Caco-2 (cell line): ENCODE measurements at regions of chr6 and their contacts with region 1.

Region 1: DNA sequence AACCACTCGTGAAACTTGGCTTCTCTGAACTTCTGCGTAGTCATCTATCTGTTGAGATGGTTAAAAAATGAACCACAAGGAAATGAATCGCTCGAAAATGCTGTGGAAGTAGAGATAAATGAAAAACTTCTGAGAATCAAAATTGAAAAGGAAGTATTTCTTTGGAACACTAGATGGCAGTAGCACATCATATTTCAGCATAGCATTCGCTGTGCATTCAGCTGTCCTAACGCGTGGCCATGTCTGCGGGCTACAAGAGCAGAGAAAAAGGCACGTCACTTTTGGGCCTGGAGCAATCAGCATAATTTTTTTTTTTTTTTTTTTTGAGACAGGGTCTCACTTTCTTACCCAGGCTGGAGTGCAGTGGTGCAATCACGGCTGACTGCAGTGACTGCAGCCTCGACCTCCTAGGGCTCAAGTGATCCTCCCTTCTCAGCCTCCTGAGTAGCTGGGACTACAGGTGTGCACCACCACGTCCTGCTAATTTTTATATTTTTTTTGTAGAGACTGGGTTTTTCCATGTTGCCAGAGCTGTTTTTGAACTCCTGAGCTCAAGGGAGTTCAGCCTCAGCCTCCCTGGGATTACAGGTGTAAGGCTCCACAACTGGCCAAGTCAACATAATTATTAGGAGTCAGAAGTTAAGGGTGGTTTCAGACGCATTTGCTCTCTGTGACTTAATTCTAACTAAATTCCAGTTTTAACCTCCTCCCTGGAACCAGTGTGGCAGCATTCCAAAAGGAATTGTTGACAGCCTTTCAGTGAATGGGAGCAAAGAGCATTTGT is 8.8 kb upstream of the PERP start:
- DNase-seq: peak; percentile 67 to 73
- H3K4me3 ChIP-seq: no peak overlapping the region
- H3K4me3 Mint-ChIP-seq: no peak overlapping the region
- H3K27ac Mint-ChIP-seq: peak overlapping the region; percentile 1
- H3K4me1 ChIP-seq: peaks cover 13% of the 10 kb centered on the region; the same call in 1 of the 2 replicates
- H3K4me1 Mint-ChIP-seq: peaks cover 7% of the 10 kb centered on the region
- H3K27me3 ChIP-seq: no peaks in the 10 kb centered on the region
- H3K27me3 Mint-ChIP-seq: no peaks in the 10 kb centered on the region
- CTCF ChIP-seq: peak; percentile 55 to 58

Region 2: DNA sequence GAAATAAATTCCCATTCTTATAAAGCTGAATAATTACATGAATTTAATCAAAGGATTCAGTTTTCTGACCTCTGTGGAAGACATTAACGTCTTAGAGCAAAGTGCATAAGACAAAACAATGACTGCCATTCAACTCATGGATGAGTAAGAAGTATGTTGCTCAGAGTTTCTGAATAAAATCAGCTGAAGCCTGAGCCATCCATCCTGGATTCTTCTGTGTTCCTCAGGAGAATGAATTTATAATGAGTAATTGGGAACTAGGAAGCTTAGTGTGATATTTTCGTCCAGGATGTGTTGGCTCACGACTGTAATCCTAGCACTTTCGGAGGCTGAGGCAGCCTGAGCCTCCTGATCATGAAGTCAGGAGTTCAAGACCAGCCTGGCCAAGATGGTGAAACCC is 71.6 kb before region 1 on chr6:
- CTCF ChIA-PET with region 1: no interaction called
- POLR2A ChIA-PET with region 1: no interaction called
- intact Hi-C with region 1: no loop called
- DNase-seq: no peak
- H3K4me3 ChIP-seq: no peak overlapping the region
- H3K4me3 Mint-ChIP-seq: no peak overlapping the region
- H3K27ac Mint-ChIP-seq: no peak overlapping the region
- H3K4me1 ChIP-seq: no peaks in the 10 kb centered on the region
- H3K4me1 Mint-ChIP-seq: no peaks in the 10 kb centered on the region
- H3K27me3 ChIP-seq: no peaks in the 10 kb centered on the region
- H3K27me3 Mint-ChIP-seq: no peaks in the 10 kb centered on the region
- CTCF ChIP-seq: no peak

Region 3: DNA sequence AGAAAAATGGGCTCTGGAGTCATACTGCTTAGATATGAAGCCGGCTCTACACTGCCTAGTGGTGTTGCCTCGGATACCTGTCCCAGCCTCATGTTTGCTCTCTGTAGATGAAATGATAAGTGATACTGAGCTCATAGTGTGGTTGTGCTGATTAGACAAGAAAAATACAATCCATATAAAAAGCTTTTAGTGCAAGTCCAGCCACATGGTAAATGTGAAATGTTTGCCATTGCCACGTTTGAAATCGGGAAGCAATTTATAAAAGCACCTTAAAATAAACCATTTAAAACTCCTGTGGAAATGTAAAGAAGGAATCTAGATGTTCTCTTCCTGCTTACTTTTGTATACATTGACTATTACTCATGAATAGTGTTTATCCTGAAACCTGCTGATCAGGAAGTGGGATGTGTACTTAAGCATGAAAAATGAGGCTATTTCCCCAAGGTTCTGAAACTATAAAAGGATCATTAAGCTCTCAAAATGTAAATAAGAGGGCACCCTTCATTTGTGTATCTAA is 115.4 kb after region 1 on chr6:
- CTCF ChIA-PET with region 1: interaction called, 8 read pairs
- POLR2A ChIA-PET with region 1: no interaction called
- intact Hi-C with region 1: loop called (anchors 5 kb)
- DNase-seq: peak; percentile 45 to 51
- H3K4me3 ChIP-seq: no peak overlapping the region
- H3K4me3 Mint-ChIP-seq: peak overlapping the region; percentile 25
- H3K27ac Mint-ChIP-seq: peak overlapping the region; percentile 47
- H3K4me1 ChIP-seq: peaks cover 27% of the 10 kb centered on the region
- H3K4me1 Mint-ChIP-seq: peaks cover 34% of the 10 kb centered on the region
- H3K27me3 ChIP-seq: no peaks in the 10 kb centered on the region
- H3K27me3 Mint-ChIP-seq: no peaks in the 10 kb centered on the region
- CTCF ChIP-seq: no peak

Region 4: DNA sequence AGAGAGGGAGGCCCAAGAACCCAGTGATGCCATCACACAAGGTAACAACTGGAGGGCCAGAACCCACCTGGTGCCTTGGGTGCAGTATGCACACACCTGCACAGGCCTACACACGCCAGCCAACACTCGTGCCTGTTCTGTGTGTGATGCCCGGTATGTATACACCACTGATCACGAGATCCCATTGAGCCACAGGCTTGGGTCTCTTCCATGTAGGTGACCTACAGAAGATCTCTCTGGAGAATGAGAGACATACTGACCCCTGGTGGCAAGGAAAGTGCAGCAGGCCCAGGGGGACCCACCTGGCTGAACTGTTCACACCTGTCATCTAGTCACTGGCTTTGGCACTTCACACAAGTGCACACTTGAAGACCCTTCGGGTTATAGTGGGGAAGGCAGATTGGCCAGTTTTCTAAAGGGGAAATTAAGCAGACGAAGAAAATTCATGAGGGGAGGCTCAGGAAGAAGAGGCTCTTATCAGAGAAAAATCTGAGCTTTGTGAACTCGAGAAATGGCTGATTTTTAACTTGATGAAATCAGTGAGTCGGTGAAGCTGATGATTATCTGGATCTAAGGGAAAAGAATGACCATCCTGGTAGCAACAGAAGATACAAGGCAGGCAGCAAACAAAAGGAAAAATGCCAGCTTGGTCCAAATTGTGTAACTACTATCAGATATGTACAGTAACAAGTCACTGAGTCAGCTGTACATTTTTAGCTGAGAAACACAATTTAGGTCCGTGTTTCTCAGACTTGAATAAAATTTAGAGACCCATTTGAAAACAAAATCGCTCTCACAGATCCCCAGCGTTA is 171.3 kb after region 1 on chr6:
- CTCF ChIA-PET with region 1: interaction called, 3 read pairs
- POLR2A ChIA-PET with region 1: no interaction called
- intact Hi-C with region 1: loop called (anchors 1 kb)
- DNase-seq: peak; percentile 69 to 77
- H3K4me3 ChIP-seq: no peak overlapping the region
- H3K4me3 Mint-ChIP-seq: no peak overlapping the region
- H3K27ac Mint-ChIP-seq: peak overlapping the region; percentile 13
- H3K4me1 ChIP-seq: no peaks in the 10 kb centered on the region
- H3K4me1 Mint-ChIP-seq: no peaks in the 10 kb centered on the region
- H3K27me3 ChIP-seq: no peaks in the 10 kb centered on the region
- H3K27me3 Mint-ChIP-seq: no peaks in the 10 kb centered on the region
- CTCF ChIP-seq: peak; percentile 69 to 81

Region 5: GRCh38 chr6:138509371-138509770 is 393.3 kb after region 1 on chr6:
- CTCF ChIA-PET with region 1: no interaction called
- POLR2A ChIA-PET with region 1: no interaction called
- intact Hi-C with region 1: loop called (anchors 1 kb)
- DNase-seq: peak; percentile 47 to 64
- H3K4me3 ChIP-seq: no peak overlapping the region
- H3K4me3 Mint-ChIP-seq: no peak overlapping the region
- H3K27ac Mint-ChIP-seq: no peak overlapping the region
- H3K4me1 ChIP-seq: peaks cover 50% of the 10 kb centered on the region
- H3K4me1 Mint-ChIP-seq: peaks cover 27% of the 10 kb centered on the region
- H3K27me3 ChIP-seq: no peaks in the 10 kb centered on the region
- H3K27me3 Mint-ChIP-seq: no peaks in the 10 kb centered on the region
- CTCF ChIP-seq: peak; percentile 41 to 61

Region 6: GRCh38 chr6:138765896-138766655 is 650.0 kb after region 1 on chr6:
- CTCF ChIA-PET with region 1: interaction called, 3 read pairs
- POLR2A ChIA-PET with region 1: no interaction called
- intact Hi-C with region 1: loop called (anchors 5 kb)
- DNase-seq: peak in 1 of 2 experiments; percentile 25
- H3K4me3 ChIP-seq: no peak overlapping the region
- H3K4me3 Mint-ChIP-seq: no peak overlapping the region
- H3K27ac Mint-ChIP-seq: no peak overlapping the region
- H3K4me1 ChIP-seq: no peaks in the 10 kb centered on the region
- H3K4me1 Mint-ChIP-seq: no peaks in the 10 kb centered on the region
- H3K27me3 ChIP-seq: no peaks in the 10 kb centered on the region
- H3K27me3 Mint-ChIP-seq: no peaks in the 10 kb centered on the region
- CTCF ChIP-seq: peak; percentile 40 to 49